Dendritic cell treated with granulocyte-macrophage colony-stimulating factor and Interleukin-4, amounts not matched to agents 40 ng/mL and 50 ng/mL, for 4 days (primary cell): ENCODE measurements at regions of chr10 and their contacts with region 1.

Region 1: DNA sequence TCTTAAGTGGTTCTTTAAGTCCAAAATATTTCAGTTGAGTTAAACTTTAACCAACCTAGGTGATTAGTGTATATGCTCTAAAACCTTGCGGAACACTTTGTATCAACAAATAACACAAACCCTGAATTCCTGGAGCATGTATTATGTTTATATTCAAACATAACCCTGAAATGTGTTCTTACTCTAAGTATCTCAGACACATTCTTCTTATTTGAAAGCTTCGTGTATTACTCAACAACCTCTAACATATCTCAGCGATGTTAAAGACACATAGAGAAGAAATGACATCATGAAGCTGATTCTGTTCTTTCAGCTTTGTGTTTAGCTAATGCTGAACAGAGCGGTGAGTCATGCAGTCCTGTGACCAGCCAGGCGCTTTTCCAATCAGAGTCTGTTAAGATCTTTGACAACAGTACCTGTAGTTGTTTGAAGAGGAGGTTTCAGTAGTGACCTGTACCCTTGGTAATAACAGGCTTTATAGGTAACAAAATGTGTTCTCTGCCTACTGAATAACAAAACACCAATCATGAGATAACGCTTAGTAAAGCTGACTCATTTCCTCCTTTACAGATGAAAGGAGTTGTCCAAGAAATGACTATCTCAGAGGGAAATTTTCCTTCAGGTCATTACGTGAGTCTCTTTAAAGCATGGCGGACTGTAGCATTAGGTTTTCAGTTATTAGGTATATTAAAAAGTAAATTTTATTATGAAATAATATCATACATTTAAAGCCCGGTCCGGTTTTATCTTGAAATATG is 67.3 kb upstream of the KLF6 start:
- H3K4me3 Mint-ChIP-seq: no peak overlapping the region
- H3K27ac Mint-ChIP-seq: peak overlapping the region; percentile 99
- H3K4me1 Mint-ChIP-seq: peaks cover 55% of the 10 kb centered on the region
- H3K27me3 Mint-ChIP-seq: no peaks in the 10 kb centered on the region

Region 2: GRCh38 chr10:3605882-3606281 is 246.4 kb before region 1 on chr10:
- intact Hi-C with region 1: no loop called
- H3K4me3 Mint-ChIP-seq: no peak overlapping the region
- H3K27ac Mint-ChIP-seq: no peak overlapping the region
- H3K4me1 Mint-ChIP-seq: peaks cover 6% of the 10 kb centered on the region
- H3K27me3 Mint-ChIP-seq: peaks cover 6% of the 10 kb centered on the region

Region 3: DNA sequence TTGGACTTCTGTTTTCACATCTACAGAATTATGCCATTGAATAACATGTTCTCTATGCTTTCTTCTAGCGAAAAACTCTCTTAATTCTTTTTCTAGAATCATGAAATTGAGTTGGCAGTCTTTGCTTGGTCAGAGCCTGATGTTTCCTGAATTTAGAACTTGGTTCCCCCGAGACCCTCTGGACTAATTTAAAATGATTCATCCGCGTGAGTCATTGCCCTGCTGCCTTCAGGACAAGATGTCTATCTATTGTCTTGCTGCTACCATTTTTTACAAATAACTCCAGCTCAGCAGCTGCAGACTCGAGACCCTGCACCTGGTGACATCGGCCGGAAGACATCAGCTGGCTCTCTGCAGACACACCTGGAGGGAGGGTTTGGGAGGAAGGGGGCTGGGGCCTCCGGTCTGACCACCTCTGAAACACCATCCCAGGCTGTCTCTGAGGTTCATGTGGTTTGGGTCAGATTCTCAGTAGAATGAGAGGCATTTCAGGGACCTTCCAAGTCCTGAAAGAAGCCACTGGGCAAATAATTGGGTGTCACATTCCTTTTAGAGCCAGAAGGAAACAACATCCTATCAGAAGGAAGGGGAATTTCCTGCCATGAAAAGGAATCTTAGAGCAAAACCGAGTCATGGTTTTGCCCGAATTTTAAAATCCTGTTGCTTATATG is 46.4 kb before region 1 on chr10:
- intact Hi-C with region 1: loop called (anchors 1 kb)
- H3K4me3 Mint-ChIP-seq: no peak overlapping the region
- H3K27ac Mint-ChIP-seq: no peak overlapping the region
- H3K4me1 Mint-ChIP-seq: peaks cover 60% of the 10 kb centered on the region
- H3K27me3 Mint-ChIP-seq: no peaks in the 10 kb centered on the region

Region 4: GRCh38 chr10:3867454-3868270 is 15.3 kb after region 1 on chr10:
- intact Hi-C with region 1: loop called (anchors 2 kb)
- H3K4me3 Mint-ChIP-seq: no peak overlapping the region
- H3K27ac Mint-ChIP-seq: peak overlapping the region; percentile 61
- H3K4me1 Mint-ChIP-seq: peaks cover 52% of the 10 kb centered on the region
- H3K27me3 Mint-ChIP-seq: no peaks in the 10 kb centered on the region